Cardiac septum (tissue), 1 donor: ENCODE measurements at regions of chrX and their contacts with region 1.

Region 1: DNA sequence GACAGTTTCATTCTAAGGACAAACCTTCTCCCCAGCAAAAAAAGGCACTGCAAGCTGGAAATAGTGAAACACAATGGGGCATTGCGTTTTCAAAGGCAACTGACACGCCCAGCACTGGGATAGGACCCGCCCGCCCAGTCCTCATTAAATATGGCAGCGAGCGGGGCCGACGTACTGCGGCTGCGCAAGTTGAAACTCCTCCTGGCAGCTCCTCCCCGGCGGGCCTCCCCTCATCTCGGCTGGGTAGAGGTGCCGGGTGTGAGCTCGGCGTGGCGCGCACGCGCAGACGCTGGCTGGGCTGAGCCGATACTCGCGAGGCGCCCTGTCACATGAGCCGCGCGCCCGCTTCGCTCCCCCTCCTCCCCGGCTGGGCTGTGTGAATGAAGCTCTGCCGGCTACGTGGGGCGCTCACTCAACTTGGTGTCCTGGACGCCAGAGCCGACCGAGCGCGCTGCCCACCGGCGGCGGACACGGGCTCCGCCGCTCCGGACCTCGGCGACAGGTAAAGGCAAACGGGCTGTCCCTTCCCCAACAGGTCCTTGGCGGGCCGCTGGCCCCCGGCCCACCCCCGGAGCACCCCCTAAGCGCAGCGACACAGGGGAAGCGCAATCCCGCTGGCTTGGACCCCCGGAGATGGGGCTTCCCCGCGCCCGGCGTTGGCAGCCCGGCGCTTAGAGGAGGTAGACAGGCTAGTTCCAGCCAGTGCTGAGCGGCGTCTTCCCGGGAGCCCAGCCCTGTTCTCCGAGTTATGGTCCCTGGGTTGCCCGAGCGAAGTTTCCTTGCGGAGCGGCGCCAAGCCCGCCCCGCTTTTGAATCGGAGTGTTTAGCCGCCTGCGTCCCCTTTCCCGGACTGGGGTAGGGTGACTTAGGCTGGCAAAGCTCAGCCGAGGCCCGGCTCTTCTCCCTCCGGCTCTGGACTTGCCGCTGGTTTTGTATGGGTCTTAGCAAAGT is at the start of gene CLCN5:
- DNase-seq: peak; percentile 97
- total RNA-seq, gene CLCN5: 2.1 TPM

Region 2: GRCh38 chrX:49862093-49862492 is 60.5 kb before region 1 on chrX:
- intact Hi-C with region 1: no loop called
- DNase-seq: no peak

Region 3: DNA sequence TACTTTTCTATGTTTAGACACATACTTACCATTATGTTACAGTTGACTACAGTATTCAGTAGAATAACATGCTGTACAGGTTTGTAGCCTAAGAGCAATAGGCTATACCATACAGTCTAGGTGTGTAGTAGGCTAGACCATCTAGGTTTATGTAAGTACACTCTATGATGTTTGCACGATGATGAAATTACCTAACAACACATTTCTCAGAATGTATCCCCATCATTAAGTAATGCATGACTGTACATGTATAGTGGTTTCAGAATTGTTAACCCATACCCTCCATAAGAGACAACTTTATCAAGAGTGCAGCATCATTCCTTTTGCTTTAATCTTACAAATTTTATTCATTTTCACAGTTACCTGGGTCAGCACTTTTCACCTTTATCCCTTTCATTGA is 126.7 kb after region 1 on chrX:
- intact Hi-C with region 1: no loop called
- DNase-seq: no peak

Region 4: GRCh38 chrX:50081282-50081889 is 158.8 kb after region 1 on chrX:
- intact Hi-C with region 1: loop called (anchors 5 kb)
- DNase-seq: no peak